ENCODE measurements at regions of chr19 and their contacts with region 1.

Region 1: GRCh38 chr19:55476100-55476775 is at the start of gene ZNF628:
- DNase-seq: peak; percentile 99
- ATAC-seq: peak; percentile 96
- H3K4me3 Mint-ChIP-seq: peak within 1 kb of the TSS; percentile 84
- H3K27ac Mint-ChIP-seq: peak within 1 kb of the TSS; percentile 88
- H3K4me1 Mint-ChIP-seq: peaks cover 32% of the 10 kb centered on the region
- H3K27me3 Mint-ChIP-seq: no peaks in the 10 kb centered on the region
- total RNA-seq, gene ZNF628: 5.6 to 6.8 TPM

Region 2: DNA sequence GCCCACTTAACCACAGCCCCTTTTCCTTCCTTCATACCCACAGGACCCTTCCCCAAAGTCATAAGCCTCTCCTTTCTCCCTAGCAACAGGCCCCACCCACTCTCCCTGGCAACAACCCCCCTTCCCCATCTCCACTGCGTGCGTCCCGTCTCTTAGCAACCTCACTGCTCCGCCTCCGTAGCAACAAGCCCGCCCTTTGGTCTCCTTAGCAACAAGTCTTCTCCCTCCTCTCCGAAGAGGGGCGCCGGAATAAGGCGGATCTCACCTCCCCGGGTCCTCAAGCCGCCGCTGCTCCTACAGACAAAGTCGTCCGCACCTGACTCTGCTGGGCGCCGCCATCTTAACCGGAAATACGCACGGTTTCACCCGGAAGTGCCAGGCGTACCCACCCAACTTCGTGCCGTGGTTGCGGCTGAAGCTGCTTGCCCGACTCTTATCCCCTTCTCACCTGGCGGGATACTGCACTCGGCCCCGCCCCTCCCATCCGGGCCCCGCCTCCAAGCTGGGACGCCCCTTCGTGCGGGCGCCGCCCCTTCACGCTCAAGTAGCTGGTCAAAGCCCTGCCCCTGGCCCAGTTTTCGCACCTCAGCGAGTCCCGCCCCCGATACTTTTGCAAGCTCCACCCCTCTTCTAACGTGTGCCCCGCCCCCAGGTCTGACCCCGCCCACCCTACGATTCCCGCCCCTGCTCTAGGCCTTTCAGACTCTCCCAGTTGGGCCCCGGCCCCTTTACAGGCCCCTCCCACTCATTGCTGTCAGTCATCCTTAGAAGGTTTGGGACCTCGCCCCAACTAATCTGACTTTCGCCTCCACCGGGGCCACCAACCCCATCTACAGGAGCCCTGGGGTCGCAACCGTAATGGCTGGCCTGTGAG is 196.2 kb before region 1 on chr19 and contains the start of gene HSPBP1:
- CTCF ChIA-PET with region 1: interaction called, 3 read pairs
- POLR2A ChIA-PET with region 1: interaction called, 3 read pairs
- intact Hi-C with region 1: loop called in 1 of 2 experiments (anchors 1 kb)
- DNase-seq: peak; percentile 98
- ATAC-seq: peak; percentile 92
- H3K4me3 Mint-ChIP-seq: peak within 1 kb of the TSS; percentile 100
- H3K27ac Mint-ChIP-seq: peak within 1 kb of the TSS; percentile 98
- H3K4me1 Mint-ChIP-seq: peaks cover 24% of the 10 kb centered on the region
- H3K27me3 Mint-ChIP-seq: no peaks in the 10 kb centered on the region
- total RNA-seq, gene HSPBP1: 41.1 to 45.2 TPM

Region 3: GRCh38 chr19:55461259-55461973 is 14.8 kb before region 1 on chr19 and contains the start of gene ISOC2:
- CTCF ChIA-PET with region 1: interaction called, 4 read pairs
- POLR2A ChIA-PET with region 1: interaction called, 9 read pairs
- intact Hi-C with region 1: loop called in 1 of 2 experiments (anchors 1 kb)
- DNase-seq: peak; percentile 100
- ATAC-seq: peak; percentile 98
- H3K4me3 Mint-ChIP-seq: peak within 1 kb of the TSS; percentile 80
- H3K27ac Mint-ChIP-seq: peak within 1 kb of the TSS; percentile 82
- H3K4me1 Mint-ChIP-seq: peaks cover 14% of the 10 kb centered on the region
- H3K27me3 Mint-ChIP-seq: no peaks in the 10 kb centered on the region
- total RNA-seq, gene ISOC2: 24.3 to 28.0 TPM

Region 4: GRCh38 chr19:55580628-55581144 is 104.4 kb after region 1 on chr19 and contains the start of gene ZNF579:
- CTCF ChIA-PET with region 1: interaction called, 3 read pairs
- POLR2A ChIA-PET with region 1: no interaction called
- intact Hi-C with region 1: loop called in 1 of 2 experiments (anchors 2 kb)
- DNase-seq: peak; percentile 89
- ATAC-seq: peak; percentile 79
- H3K4me3 Mint-ChIP-seq: peak within 1 kb of the TSS; percentile 83
- H3K27ac Mint-ChIP-seq: peak within 1 kb of the TSS; percentile 78
- H3K4me1 Mint-ChIP-seq: peaks cover 23% of the 10 kb centered on the region
- H3K27me3 Mint-ChIP-seq: no peaks in the 10 kb centered on the region
- total RNA-seq, gene ZNF579: 7.2 to 7.5 TPM

Region 5: DNA sequence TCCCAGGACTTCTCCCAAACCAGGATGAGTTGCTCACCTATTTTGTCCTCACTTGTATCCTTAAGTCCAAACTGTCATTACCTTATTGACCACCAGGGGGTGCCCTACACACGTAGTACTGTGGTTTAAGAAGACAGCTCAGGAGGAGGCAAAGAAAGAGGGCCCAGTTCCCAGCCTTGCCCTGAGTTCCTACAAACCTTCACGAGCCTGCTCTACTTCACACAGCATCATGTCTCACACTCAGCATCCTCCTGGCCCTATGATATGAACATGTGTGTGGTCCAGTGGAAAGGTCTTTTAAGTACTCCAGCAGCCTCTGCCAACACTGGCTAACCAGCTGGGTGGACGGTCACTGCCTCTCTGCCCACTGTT is 156.2 kb after region 1 on chr19:
- CTCF ChIA-PET with region 1: interaction called, 11 read pairs
- POLR2A ChIA-PET with region 1: no interaction called
- intact Hi-C with region 1: no loop called
- DNase-seq: peak; percentile 93
- ATAC-seq: peak; percentile 43
- H3K4me3 Mint-ChIP-seq: peak overlapping the region; percentile 30
- H3K27ac Mint-ChIP-seq: peak overlapping the region; percentile 37
- H3K4me1 Mint-ChIP-seq: peaks cover 37% of the 10 kb centered on the region
- H3K27me3 Mint-ChIP-seq: no peaks in the 10 kb centered on the region

Region 6: GRCh38 chr19:55674841-55675660 is 198.8 kb after region 1 on chr19 and contains the start of gene EPN1:
- CTCF ChIA-PET with region 1: no interaction called
- POLR2A ChIA-PET with region 1: no interaction called
- intact Hi-C with region 1: loop called in 1 of 2 experiments (anchors 1 kb)
- DNase-seq: peak; percentile 99
- ATAC-seq: peak; percentile 91
- H3K4me3 Mint-ChIP-seq: peak within 1 kb of the TSS; percentile 95
- H3K27ac Mint-ChIP-seq: peak within 1 kb of the TSS; percentile 96
- H3K4me1 Mint-ChIP-seq: peaks cover 63% of the 10 kb centered on the region
- H3K27me3 Mint-ChIP-seq: no peaks in the 10 kb centered on the region
- total RNA-seq, gene EPN1: 32.5 to 37.1 TPM

Measured in activated CD4-positive, alpha-beta T cell treated with anti-CD3 and anti-CD28 coated beads for 36 hours (primary cell).